ENCODE measurements at regions of chr11 and their contacts with region 1.

Region 1: DNA sequence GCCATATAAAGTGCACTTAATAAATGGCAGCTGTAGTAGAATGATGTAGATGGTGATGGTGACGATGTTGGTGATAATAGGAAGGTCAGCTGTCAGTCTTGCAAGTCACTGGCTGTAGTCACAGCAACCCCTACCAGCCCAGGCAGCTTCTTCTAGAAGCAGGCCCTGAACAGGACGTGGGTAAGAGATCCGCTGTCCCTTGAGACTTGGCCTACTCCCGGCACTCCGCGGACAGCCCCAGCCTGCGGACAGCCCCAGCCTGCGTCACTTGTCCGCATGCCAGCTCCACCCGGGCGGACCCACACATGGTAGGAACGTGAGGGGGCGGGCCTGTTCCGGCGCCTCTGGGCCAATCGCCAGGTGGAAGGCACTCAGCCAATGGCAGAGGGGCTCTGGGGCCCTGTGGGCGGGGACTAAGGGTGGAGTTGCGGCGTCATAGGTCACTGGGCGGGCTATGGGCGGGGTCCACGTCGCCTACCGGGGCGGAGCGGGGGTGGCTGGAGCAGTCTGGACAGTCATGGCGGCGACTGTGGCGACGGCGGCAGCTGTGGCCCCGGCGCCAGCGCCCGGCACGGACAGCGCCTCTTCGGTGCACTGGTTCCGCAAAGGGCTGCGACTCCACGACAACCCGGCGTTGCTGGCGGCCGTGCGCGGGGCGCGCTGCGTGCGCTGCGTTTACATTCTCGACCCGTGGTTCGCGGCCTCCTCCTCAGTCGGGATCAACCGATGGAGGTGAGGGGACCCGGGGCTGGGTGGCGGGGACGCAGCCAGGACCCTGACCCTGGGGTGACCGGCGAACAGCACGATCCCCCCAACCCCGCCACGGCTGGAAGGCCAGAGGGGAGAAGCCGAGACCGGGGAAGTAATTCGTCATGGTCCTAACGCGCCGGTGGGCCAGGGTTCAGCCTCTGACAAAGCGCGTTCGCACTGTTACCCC is at the start of gene CRY2:
- DNase-seq: peak; percentile 97
- ATAC-seq: peak; percentile 89
- H3K4me3 Mint-ChIP-seq: peak within 1 kb of the TSS; percentile 85
- H3K27ac Mint-ChIP-seq: peak within 1 kb of the TSS; percentile 94
- H3K4me1 Mint-ChIP-seq: peaks cover 68% of the 10 kb centered on the region
- H3K27me3 Mint-ChIP-seq: no peaks in the 10 kb centered on the region
- CTCF ChIP-seq: no peak
- total RNA-seq, gene CRY2: 47.5 and 56.8 TPM in 2 replicates

Region 2: DNA sequence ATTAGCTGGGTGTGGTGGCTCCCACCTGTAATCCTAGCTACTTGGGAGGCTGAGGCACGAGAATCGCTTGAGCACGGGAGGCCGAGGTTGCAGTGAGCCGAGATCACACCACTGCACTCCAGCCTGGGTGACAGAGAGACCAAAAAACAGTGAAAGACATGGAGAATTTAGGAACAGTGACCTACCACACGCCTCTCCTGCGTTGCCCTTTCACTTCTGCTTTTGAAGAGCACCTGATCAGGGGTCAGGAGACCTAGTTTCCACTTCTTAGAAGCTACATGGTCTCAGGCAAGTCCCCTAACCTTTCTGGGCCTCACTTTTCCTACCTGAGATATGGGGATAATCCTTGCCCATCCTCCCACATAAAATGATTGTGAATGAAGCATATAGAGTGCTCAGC is 30.1 kb before region 1 on chr11:
- CTCF ChIA-PET with region 1: interaction called, 7 read pairs
- POLR2A ChIA-PET with region 1: interaction called, 20 read pairs
- intact Hi-C with region 1: loop called (anchors 1 kb)
- DNase-seq: no peak
- ATAC-seq: peak; percentile 72
- H3K4me3 Mint-ChIP-seq: peak overlapping the region; percentile 53
- H3K27ac Mint-ChIP-seq: peak overlapping the region; percentile 67
- H3K4me1 Mint-ChIP-seq: peaks cover 34% of the 10 kb centered on the region
- H3K27me3 Mint-ChIP-seq: no peaks in the 10 kb centered on the region
- CTCF ChIP-seq: no peak

Region 3: GRCh38 chr11:45899448-45900173 is 52.4 kb after region 1 on chr11:
- CTCF ChIA-PET with region 1: no interaction called
- POLR2A ChIA-PET with region 1: interaction called, 9 read pairs
- intact Hi-C with region 1: loop called (anchors 2 kb)
- DNase-seq: peak; percentile 74
- ATAC-seq: peak; percentile 87
- H3K4me3 Mint-ChIP-seq: peak overlapping the region; percentile 76
- H3K27ac Mint-ChIP-seq: no peak overlapping the region
- H3K4me1 Mint-ChIP-seq: peaks cover 8% of the 10 kb centered on the region
- H3K27me3 Mint-ChIP-seq: peaks cover 25% of the 10 kb centered on the region
- CTCF ChIP-seq: no peak

Region 4: DNA sequence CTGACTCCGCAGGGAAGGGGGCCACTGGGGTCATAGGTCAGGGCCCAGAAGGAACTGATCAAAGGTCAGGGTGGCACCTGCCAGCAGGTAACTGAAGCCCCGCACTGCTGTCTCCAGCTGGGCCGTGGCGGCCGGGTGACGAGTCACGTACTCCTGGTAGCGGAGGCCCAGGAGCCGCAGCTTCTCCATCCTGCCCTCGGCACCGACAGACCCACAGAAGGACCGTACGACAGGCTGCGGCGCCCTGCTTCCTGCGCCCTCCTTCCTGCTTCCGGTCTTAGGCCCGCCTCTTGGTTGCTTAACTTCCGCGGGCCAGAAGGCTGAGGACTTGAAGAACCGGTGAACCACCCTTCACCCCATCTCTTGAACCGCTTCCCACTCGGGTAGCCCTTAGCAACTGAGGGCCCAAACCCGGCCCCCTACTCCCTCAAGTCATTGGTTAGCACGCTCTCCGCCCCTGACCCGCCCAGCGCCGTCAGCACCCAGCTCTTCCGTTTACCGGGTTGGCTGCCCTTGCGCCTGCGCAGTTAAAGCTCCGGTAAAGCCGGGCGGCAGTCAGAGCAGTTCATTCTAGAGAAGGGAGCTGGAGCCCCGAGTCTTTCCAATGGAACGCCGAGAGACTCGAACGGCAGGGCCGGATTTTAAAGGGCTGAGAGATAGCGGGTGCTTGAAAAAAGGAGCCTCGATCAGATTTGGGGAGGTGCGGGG is 70.5 kb after region 1 on chr11 and contains the start of gene PEX16:
- CTCF ChIA-PET with region 1: interaction called, 4 read pairs
- POLR2A ChIA-PET with region 1: interaction called, 28 read pairs
- intact Hi-C with region 1: loop called (anchors 1 kb)
- DNase-seq: peak; percentile 87
- ATAC-seq: peak; percentile 85
- H3K4me3 Mint-ChIP-seq: peak within 1 kb of the TSS; percentile 94
- H3K27ac Mint-ChIP-seq: peak within 1 kb of the TSS; percentile 97
- H3K4me1 Mint-ChIP-seq: peaks cover 61% of the 10 kb centered on the region
- H3K27me3 Mint-ChIP-seq: no peaks in the 10 kb centered on the region
- CTCF ChIP-seq: no peak
- total RNA-seq, gene PEX16: 72.0 and 77.7 TPM in 2 replicates

Region 5: DNA sequence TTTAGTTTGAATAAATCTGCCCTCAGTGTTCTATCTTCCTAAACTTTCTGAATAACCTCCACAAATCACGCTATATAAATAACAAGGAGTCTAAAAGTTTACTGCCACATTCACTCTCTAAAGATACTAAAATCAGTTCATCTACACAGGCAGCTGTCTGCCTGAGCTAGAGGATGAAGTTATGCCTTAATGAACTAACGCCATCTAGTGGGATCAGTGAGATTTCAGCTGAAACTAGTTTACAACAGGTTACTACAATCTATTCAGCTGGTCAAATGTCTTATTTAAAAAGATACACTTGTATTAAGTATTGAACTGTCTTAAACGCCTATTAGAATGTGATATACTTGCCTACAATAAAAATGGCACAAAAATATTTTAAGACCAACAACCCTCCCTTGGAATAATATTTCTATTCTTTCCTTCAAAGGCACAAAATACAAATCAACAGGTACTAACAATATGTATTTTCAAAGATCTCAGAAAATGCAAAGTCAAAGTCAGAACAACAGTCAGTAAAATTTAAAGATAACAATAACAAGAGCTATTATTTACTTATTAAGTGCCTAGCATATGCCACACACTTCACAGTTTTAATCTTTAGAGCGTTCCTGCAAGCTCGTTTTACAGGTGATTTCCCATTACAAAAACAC is 159.3 kb after region 1 on chr11:
- CTCF ChIA-PET with region 1: interaction called, 37 read pairs
- POLR2A ChIA-PET with region 1: interaction called, 6 read pairs
- intact Hi-C with region 1: loop called (anchors 1 kb)
- DNase-seq: no peak
- ATAC-seq: peak; percentile 76
- H3K4me3 Mint-ChIP-seq: no peak overlapping the region
- H3K27ac Mint-ChIP-seq: no peak overlapping the region
- H3K4me1 Mint-ChIP-seq: peaks cover 3% of the 10 kb centered on the region
- H3K27me3 Mint-ChIP-seq: no peaks in the 10 kb centered on the region
- CTCF ChIP-seq: peak; percentile 20

Region 6: DNA sequence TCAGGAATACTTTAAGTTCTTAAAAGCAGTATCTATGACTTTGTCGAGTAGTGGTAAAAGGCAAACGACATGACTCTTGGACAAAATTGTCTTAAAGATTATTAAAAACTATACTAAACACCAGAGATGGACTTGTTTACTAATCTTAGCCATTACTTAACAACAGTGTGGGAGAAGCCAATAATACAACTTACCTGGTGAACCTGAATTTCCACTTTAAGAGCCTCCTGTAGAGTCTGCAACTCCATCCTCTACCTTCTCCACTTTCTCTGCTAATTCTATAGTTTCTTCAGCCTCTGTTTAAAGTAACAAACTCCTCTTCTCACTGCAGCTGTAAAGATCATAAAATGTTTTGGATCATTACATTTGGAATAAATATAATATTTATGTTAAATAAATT is 236.7 kb after region 1 on chr11:
- CTCF ChIA-PET with region 1: no interaction called
- POLR2A ChIA-PET with region 1: no interaction called
- intact Hi-C with region 1: no loop called
- DNase-seq: no peak
- ATAC-seq: no peak
- H3K4me3 Mint-ChIP-seq: no peak overlapping the region
- H3K27ac Mint-ChIP-seq: no peak overlapping the region
- H3K4me1 Mint-ChIP-seq: no peaks in the 10 kb centered on the region
- H3K27me3 Mint-ChIP-seq: no peaks in the 10 kb centered on the region
- CTCF ChIP-seq: no peak

Region 7: DNA sequence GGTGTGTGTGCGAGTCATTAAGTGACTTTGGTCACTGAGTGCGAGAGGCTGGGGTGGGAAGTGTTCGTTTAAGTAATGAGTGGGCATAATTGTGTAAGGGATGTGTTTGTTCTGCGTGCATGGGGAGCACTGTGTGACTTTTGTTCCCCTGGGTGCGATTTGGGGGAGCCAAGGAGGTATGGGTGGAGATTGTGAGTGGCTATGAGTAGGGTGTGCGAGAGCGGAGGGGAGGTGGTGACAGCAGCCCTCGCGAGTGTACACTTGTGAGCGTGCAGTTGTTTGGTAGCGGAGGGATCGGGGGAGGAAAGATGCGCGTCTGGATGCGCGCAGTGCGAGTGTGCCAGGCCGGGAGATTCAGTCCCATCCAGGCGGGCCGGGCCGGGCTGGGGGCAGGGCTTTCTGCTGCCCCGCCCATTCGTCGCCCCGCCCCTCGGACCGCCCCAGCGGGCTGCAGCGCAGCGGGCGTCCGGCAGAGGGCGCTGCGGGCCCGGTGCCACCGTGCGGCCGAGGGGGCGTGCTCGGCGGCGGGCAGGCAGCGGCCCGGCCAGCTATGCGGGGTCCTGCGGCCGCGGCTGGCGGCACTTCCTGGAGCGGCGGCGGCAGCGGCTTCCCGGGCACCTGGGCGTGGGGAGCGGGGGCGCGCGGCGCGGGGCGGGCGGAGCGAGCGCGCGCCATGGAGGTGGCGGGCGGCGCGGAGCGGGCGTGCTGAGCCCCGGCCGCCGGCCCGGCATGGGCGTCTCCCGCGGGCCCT is 499.8 kb after region 1 on chr11 and contains the start of gene DGKZ:
- CTCF ChIA-PET with region 1: no interaction called
- POLR2A ChIA-PET with region 1: no interaction called
- intact Hi-C with region 1: loop called (anchors 5 kb)
- DNase-seq: peak; percentile 99
- ATAC-seq: peak; percentile 93
- H3K4me3 Mint-ChIP-seq: peak within 1 kb of the TSS; percentile 90
- H3K27ac Mint-ChIP-seq: peak within 1 kb of the TSS; percentile 83
- H3K4me1 Mint-ChIP-seq: peaks cover 52% of the 10 kb centered on the region
- H3K27me3 Mint-ChIP-seq: no peaks in the 10 kb centered on the region
- CTCF ChIP-seq: no peak
- total RNA-seq, gene DGKZ: 48.1 and 53.6 TPM in 2 replicates

Measured in activated B cell treated with CpG ODN at 0.5 μM for 24 hours (primary cell).